Sciatic nerve (tissue), 2 donors: ENCODE measurements at regions of chr10 and their contacts with region 1.

Region 1: DNA sequence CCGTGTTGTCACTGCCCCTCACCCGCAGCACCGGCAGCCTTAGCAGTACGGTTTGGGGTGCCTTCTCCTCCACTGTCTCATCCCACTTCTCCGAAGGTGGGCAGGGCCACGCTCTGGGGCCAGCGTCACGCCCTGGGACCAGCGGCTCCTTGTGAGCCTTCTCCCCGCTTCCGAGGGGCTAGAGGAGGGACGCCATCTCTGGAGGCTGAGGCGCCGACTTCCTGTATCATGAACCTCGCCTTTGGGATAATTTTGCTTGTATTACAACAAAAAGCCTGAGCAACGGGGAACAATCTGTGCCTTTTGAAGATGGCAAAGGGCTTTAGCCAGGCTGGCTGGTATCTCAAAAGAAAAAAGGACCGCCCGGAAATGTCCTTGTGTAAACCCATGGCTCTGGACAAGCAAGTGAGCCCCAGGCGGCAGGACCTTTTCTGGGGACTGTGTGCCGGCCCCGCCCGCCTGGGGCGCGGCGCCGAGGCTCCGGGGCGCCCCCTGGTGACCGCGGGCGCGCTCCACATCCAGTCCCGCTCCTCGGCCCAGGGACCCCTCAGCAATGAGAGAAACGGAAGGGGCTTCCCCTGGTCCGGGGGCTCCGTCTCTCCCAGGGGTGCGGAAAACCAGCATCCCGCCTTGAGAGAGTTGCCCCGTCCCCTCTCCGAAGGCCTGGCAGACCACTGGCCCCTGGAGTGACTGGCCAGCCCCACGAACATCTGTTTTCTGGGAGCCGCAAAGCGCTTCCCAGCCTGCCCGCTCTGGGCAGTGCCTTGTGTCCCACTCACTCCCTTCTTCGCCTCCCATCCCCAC is 3.8 kb downstream of the DEPP1 start:
- DNase-seq: peak; percentile 82
- ATAC-seq: peak; percentile 63

Region 2: DNA sequence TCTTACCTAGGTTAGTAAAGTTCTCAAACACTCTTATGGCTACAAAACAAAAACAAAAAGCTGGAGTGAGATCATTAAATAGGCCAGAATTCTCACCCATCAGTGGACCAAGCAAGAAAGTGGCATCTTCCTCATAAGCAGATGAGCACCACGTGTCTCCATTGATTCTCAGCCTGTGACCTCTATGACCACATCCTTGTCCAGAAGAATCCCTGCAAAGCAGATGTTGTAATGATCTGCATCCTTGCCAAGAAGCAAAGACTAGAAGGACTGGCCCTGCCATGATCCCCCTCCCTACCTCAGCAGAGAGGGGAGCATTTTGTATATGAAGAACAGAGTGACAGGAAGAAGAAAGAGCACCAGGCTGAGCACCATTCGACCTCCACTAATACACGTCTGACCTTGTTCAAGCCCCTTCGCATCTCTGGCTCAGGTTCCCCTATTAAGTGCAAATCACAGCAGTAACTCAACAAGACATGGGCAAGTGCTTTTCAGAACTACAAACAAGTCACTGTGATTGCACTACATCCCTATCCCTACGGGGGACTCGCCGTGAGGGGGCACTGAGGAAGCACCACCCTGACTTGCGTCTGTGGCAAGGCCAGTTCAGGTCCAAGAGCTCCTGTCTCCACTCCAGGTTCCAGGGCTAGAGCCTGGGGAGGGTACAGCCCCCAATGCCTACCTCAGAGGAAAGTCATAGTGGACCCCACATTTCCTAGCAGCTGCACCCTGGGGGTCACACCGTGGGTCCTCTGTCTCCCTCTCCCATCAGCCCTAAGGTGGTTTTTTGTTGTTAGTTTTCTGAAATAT is 37.4 kb before region 1 on chr10:
- intact Hi-C with region 1: loop called (anchors 2 kb)
- DNase-seq: no peak
- ATAC-seq: peak; percentile 54